PC-9 (cell line): ENCODE measurements at regions of chr12 and their contacts with region 1.

Region 1: GRCh38 chr12:75892731-75893408 is 138.7 kb downstream of the PHLDA1 start:
- DNase-seq: peak; percentile 51 to 64
- H3K4me3 ChIP-seq: no peak overlapping the region
- H3K27ac ChIP-seq: no peak overlapping the region
- H3K4me1 ChIP-seq: peaks cover 39% of the 10 kb centered on the region
- H3K27me3 ChIP-seq: no peaks in the 10 kb centered on the region
- CTCF ChIP-seq: no peak

Region 2: GRCh38 chr12:75825686-75826085 is 67.2 kb before region 1 on chr12:
- CTCF ChIA-PET with region 1: interaction called, 4 read pairs
- POLR2A ChIA-PET with region 1: no interaction called
- intact Hi-C with region 1: loop called (anchors 5 kb)
- DNase-seq: peak; percentile 40 to 94
- H3K4me3 ChIP-seq: peak overlapping the region; percentile 21; the same call in 1 of the 2 replicates
- H3K27ac ChIP-seq: peak overlapping the region; percentile 87
- H3K4me1 ChIP-seq: peaks cover 41% of the 10 kb centered on the region
- H3K27me3 ChIP-seq: no peaks in the 10 kb centered on the region
- CTCF ChIP-seq: no peak

Region 3: DNA sequence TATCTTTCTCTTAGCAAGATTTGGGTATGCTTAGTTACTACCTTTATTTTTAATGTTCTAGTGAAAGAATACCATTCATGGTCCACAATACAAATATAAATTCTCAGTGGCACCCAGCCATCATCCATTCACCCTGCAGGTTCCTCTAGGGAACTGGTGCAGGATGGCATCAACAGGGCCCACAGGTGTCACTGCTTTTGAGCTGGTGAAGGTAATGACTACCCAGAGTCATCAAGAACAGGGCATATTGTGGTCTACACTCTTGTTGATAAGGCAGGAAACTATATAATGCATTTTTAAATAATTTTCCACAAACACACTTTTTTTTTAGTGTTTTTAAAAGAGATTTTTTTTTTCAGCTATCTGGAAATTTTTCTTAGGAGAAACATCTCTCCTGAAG is 45.1 kb before region 1 on chr12:
- CTCF ChIA-PET with region 1: no interaction called
- POLR2A ChIA-PET with region 1: no interaction called
- intact Hi-C with region 1: loop called (anchors 1 kb)
- DNase-seq: no peak
- H3K4me3 ChIP-seq: no peak overlapping the region
- H3K27ac ChIP-seq: no peak overlapping the region
- H3K4me1 ChIP-seq: peaks cover 26% of the 10 kb centered on the region
- H3K27me3 ChIP-seq: no peaks in the 10 kb centered on the region
- CTCF ChIP-seq: no peak

Region 4: DNA sequence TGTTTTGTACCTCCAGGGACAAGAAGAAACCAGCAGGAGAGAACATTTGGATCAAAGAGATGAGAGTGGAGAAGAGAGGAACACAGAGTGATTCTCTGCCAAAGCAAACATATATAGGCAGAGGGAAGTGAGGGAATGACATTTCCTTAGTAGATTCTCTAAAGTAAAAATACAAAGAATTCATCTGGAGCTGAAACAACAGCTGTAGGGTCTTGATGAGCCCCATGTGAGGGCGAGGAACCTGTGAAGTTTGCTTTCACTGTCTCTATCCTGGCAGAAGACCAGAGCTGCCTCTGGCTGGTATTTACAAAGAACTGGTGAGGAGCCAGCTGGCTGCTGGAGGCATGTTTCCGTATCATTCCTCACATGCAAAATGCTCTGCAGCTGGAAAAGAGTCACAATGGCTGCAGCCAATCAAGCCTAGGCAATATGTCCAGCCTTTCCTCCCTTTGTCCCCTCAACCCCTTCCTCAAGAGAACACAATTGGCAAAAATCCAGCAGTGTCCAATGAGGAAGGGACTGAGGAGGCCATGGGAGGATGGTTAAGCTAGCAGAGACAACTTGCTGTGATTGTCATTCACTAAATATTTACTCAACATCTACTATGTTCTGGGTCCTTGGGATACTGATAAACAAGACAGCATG is 16.2 kb after region 1 on chr12:
- CTCF ChIA-PET with region 1: no interaction called
- POLR2A ChIA-PET with region 1: no interaction called
- intact Hi-C with region 1: no loop called
- DNase-seq: no peak
- H3K4me3 ChIP-seq: no peak overlapping the region
- H3K27ac ChIP-seq: no peak overlapping the region
- H3K4me1 ChIP-seq: no peaks in the 10 kb centered on the region
- H3K27me3 ChIP-seq: no peaks in the 10 kb centered on the region
- CTCF ChIP-seq: no peak

Region 5: GRCh38 chr12:75954041-75954440 is 61.2 kb after region 1 on chr12:
- CTCF ChIA-PET with region 1: no interaction called
- POLR2A ChIA-PET with region 1: no interaction called
- intact Hi-C with region 1: loop called (anchors 5 kb)
- DNase-seq: peak; percentile 57 to 99
- H3K4me3 ChIP-seq: peak overlapping the region; percentile 19; the same call in 1 of the 2 replicates
- H3K27ac ChIP-seq: peak overlapping the region; percentile 97
- H3K4me1 ChIP-seq: peaks cover 67% of the 10 kb centered on the region
- H3K27me3 ChIP-seq: no peaks in the 10 kb centered on the region
- CTCF ChIP-seq: no peak

Region 6: DNA sequence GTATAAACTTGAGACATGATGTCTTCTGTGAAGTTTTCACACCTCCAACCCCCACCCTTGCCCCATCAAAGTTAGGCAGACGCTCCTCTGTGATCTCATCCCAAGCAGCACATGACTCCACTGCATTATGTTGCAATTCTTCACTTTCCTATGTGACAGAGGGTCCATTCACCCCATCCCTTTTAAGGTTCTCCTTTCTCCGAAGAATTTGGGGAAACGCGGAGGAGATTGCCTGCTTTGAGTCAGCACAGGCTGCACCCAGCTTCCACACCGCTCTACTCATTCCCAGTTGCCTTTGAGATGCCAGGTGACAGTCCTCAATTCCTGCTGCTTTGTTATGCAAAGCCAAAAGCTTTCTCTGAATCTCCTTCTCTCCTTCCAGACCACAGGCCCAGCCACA is 76.9 kb after region 1 on chr12:
- CTCF ChIA-PET with region 1: no interaction called
- POLR2A ChIA-PET with region 1: no interaction called
- intact Hi-C with region 1: no loop called
- DNase-seq: no peak
- H3K4me3 ChIP-seq: no peak overlapping the region
- H3K27ac ChIP-seq: no peak overlapping the region
- H3K4me1 ChIP-seq: no peaks in the 10 kb centered on the region
- H3K27me3 ChIP-seq: no peaks in the 10 kb centered on the region
- CTCF ChIP-seq: no peak